ENCODE measurements at regions of chr12 and their contacts with region 1.

Region 1: DNA sequence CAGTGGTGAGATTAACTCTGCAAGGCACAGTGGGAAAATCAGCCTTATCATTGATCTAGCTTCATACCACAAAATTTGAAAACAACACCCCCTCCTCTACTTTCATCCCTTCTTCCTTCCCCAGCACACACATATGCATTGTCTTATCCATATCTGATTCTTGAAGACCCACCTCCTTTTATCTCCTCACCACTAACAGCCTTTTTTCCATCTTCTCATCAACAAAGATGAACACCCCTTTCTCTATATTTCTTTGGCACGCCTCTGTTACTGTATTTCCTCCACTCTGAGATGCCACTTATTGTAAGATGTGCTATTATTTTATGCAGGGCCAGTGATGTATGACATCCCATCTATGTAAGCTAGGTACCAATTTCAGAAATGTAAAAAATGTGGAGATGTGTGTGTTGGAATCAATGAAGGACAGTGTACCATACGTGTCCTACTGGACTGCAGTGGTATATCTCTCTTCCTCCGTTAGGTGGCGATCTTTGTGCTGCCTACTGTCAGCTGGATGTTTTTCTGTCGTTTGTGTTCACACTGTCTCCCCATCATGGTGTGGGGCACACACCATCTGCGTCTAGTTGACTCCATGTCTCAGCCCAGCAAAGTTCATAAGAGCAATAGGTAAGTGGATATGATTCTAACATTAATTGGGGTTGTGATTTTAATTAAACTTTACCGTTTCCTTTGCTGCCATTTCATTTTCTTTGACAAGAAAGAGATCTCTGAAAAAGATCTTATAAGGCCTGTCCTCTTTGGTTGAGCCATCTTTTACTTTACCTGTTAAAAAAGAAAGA is 24.0 kb downstream of the CCDC38 start:
- DNase-seq: peak; percentile 70
- ATAC-seq: peak; percentile 97
- H3K4me3 ChIP-seq: no peak overlapping the region
- H3K27ac ChIP-seq: no peak overlapping the region
- H3K4me1 ChIP-seq: no peaks in the 10 kb centered on the region
- H3K27me3 ChIP-seq: peaks cover 15% of the 10 kb centered on the region
- CTCF ChIP-seq: peak; percentile 93

Region 2: DNA sequence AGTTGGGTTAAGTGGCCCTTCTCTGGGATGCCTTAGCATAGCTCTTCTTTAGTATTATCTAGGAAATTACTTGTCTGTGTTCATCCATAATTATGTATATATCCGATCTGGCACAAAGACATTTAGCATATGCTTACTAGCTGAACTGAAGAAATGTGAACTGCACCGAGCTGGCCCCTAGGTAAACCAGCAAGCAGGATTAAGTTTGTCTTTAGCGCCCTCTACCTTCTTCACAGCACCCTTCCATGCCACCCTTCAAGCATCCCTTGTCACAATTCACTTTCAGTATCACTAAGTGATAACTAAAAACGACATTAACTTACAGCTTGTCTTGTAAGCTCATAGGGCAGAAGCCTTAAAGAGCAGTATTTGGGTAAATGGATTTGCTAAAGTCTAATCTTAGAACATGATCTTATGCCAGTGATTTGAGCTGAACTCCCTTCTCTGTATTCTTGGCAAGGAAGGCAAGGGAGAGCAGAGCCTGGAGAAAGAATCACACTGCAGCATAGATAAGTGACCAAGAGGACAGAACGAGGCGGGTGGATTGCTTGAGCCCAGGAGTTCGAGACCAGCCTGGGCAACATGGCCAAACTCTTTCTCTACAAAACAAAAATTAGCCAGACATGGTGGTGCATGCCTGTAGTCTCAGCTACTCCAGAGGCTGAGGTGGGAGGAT is 80.4 kb after region 1 on chr12:
- CTCF ChIA-PET with region 1: interaction called, 6 read pairs
- POLR2A ChIA-PET with region 1: no interaction called
- intact Hi-C with region 1: loop called (anchors 1 kb)
- DNase-seq: peak; percentile 63
- ATAC-seq: peak; percentile 88
- H3K4me3 ChIP-seq: no peak overlapping the region
- H3K27ac ChIP-seq: no peak overlapping the region
- H3K4me1 ChIP-seq: no peaks in the 10 kb centered on the region
- H3K27me3 ChIP-seq: no peaks in the 10 kb centered on the region
- CTCF ChIP-seq: peak; percentile 79